ENCODE measurements at regions of chr4 and their contacts with region 1.

Region 1: GRCh38 chr4:185534866-185535611 is at the start of gene PDLIM3:
- DNase-seq: peak; percentile 70 to 72
- H3K4me3 ChIP-seq: peak within 1 kb of the TSS; percentile 83 to 94 (median 84)
- H3K27ac ChIP-seq: peak within 1 kb of the TSS; percentile 94 to 96
- H3K4me1 ChIP-seq: peaks cover 0 to 3% of the 10 kb centered on the region in 2 donors
- H3K27me3 ChIP-seq: no peaks in the 10 kb centered on the region
- CTCF ChIP-seq: no peak
- POLR2A ChIP-seq: peak; percentile 59
- total RNA-seq, gene PDLIM3: 25.3 to 181 (median 175) TPM

Region 2: GRCh38 chr4:184680698-184681097 is 854.3 kb before region 1 on chr4:
- intact Hi-C with region 1: no loop called
- DNase-seq: no peak
- H3K4me3 ChIP-seq: no peak overlapping the region
- H3K27ac ChIP-seq: no peak overlapping the region
- H3K4me1 ChIP-seq: no peaks in the 10 kb centered on the region
- H3K27me3 ChIP-seq: no peaks in the 10 kb centered on the region
- CTCF ChIP-seq: no peak
- POLR2A ChIP-seq: no peak

Region 3: DNA sequence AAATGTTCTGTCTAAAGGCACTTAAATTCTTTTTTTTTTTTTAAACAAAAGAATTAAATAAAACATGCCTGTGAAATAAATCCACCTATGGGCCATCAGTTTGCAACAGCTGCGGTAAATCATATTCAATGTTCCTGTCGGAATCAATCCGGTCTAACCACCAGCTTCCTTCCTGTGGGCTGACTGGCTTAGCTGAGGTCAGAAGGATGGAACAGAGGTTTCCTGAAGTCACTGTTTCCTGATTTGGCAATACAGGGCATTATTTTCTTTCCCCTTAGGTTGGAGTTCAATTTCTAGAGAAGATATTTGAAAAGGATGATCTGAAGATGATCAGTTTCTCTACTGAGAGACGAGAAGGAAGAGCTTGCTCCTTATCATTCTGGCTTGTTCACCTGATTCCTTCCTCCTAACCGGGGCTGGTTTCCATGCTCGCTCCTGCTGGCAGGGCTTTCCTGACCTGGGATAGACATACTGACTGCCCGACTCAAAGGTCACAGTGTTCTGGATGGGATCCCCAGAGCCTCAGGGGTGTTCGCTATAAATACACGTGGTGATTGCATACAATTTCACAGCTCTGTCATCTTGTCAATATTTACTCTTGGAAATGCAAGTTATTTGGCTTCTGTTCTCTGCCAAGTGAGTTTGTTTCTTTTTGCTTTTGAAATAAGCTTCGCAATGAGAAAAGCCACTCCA is 21.4 kb before region 1 on chr4:
- intact Hi-C with region 1: no loop called
- DNase-seq: no peak
- H3K4me3 ChIP-seq: no peak overlapping the region
- H3K27ac ChIP-seq: peak overlapping the region; percentile 38 to 65
- H3K4me1 ChIP-seq: no peaks in the 10 kb centered on the region
- H3K27me3 ChIP-seq: no peaks in the 10 kb centered on the region
- CTCF ChIP-seq: no peak
- POLR2A ChIP-seq: no peak

Region 4: GRCh38 chr4:185566972-185567371 is 31.9 kb after region 1 on chr4:
- intact Hi-C with region 1: loop called (anchors 5 kb)
- DNase-seq: peak in 1 of 2 donors; percentile 69
- H3K4me3 ChIP-seq: no peak overlapping the region
- H3K27ac ChIP-seq: peak overlapping the region; percentile 89 to 90
- H3K4me1 ChIP-seq: no peaks in the 10 kb centered on the region
- H3K27me3 ChIP-seq: no peaks in the 10 kb centered on the region
- CTCF ChIP-seq: no peak
- POLR2A ChIP-seq: no peak

Region 5: GRCh38 chr4:185817403-185817818 is 282.4 kb after region 1 on chr4:
- intact Hi-C with region 1: loop called (anchors 5 kb)
- DNase-seq: peak in 1 of 2 donors; percentile 79
- H3K4me3 ChIP-seq: no peak overlapping the region
- H3K27ac ChIP-seq: peak overlapping the region; percentile 52 to 75
- H3K4me1 ChIP-seq: no peaks in the 10 kb centered on the region
- H3K27me3 ChIP-seq: no peaks in the 10 kb centered on the region
- CTCF ChIP-seq: no peak
- POLR2A ChIP-seq: no peak

Region 6: DNA sequence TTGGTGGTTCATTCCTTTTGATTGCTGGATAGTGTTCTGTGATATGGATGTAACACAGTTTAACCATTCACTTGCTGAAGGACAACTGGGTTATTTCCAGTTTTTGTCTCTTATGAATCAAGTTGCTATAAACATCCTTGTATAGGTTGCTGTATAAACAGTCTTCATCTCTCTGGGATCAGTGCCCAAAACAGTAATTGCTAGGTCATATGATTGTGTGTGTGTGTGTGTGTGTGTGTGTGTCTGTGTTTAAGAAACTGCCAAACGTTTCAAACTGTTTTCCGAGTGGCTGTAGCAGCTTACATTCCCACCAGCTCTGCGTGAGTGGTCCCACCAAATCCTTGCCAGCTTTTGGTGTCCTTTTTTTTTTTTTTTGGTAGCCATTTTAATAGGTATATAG is 791.4 kb after region 1 on chr4:
- intact Hi-C with region 1: no loop called
- DNase-seq: no peak
- H3K4me3 ChIP-seq: no peak overlapping the region
- H3K27ac ChIP-seq: no peak overlapping the region
- H3K4me1 ChIP-seq: no peaks in the 10 kb centered on the region
- H3K27me3 ChIP-seq: no peaks in the 10 kb centered on the region
- CTCF ChIP-seq: no peak
- POLR2A ChIP-seq: no peak

Measured in breast epithelium (tissue), 4 donors.